ENCODE measurements at regions of chr19 and their contacts with region 1.

Region 1: GRCh38 chr19:41353466-41354342 is at the start of gene TGFB1:
- DNase-seq: peak; percentile 81
- H3K4me3 ChIP-seq: peak within 1 kb of the TSS; percentile 75 to 99 (median 90)
- H3K27ac ChIP-seq: peak within 1 kb of the TSS; percentile 70
- H3K4me1 ChIP-seq: peaks cover 12% of the 10 kb centered on the region
- H3K27me3 ChIP-seq: no peaks in the 10 kb centered on the region
- CTCF ChIP-seq: peak; percentile 92 to 96
- POLR2A ChIP-seq: peak; percentile 88
- total RNA-seq, gene TGFB1: 250 and 294 TPM in 2 replicates

Region 2: DNA sequence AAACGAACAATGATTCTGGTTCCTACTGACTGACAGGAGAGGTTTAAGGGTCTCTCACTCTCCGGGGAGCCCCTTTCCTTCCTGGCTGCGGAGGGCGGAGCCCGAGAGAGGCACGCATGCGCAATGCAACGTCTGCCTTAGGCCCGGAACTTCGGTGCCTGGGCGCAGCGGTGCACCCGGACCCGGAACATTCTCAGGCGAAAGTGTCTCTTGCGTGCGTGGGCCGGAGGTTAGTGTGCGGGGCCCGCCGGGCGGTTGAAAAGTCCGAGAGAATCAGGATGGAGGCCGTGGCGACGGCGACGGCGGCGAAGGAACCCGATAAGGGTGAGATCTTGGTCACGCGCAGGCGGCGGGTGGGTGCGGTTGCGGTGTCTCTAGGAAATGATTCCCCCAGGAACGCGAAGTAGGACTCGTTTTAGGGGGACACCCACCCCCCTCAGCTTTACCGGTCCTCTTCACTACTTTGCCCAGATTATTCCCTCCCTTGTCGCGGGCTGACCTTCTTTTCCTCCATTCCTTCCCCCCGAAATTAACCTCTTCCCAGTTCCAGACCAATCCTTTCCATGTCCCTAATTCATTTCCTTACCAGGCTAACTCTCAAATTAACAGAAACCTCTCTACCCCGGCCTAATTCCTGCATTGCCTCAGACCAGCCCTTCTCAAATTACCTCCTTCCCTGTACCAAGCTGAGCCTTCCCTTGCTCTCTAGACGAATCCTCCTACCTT is 43.5 kb before region 1 on chr19 and contains the start of gene CCDC97:
- CTCF ChIA-PET with region 1: interaction called, 19 read pairs
- POLR2A ChIA-PET with region 1: no interaction called
- dilution Hi-C with region 1: no loop called
- intact Hi-C with region 1: loop called (anchors 1 kb)
- DNase-seq: peak; percentile 91
- H3K4me3 ChIP-seq: peak within 1 kb of the TSS; percentile 71 to 97 (median 81)
- H3K27ac ChIP-seq: peak within 1 kb of the TSS; percentile 57
- H3K4me1 ChIP-seq: peaks cover 42% of the 10 kb centered on the region
- H3K27me3 ChIP-seq: no peaks in the 10 kb centered on the region
- CTCF ChIP-seq: no peak
- POLR2A ChIP-seq: peak; percentile 98
- total RNA-seq, gene CCDC97: 24.2 and 27.2 TPM in 2 replicates

Region 3: GRCh38 chr19:41327576-41328156 is 26.0 kb before region 1 on chr19:
- CTCF ChIA-PET with region 1: interaction called, 40 read pairs
- POLR2A ChIA-PET with region 1: interaction called, 4 read pairs
- dilution Hi-C with region 1: no loop called
- intact Hi-C with region 1: loop called (anchors 1 kb)
- DNase-seq: peak; percentile 88
- H3K4me3 ChIP-seq: peak overlapping the region in 1 of 3 experiments; percentile 1
- H3K27ac ChIP-seq: peak overlapping the region; percentile 100
- H3K4me1 ChIP-seq: peaks cover 61% of the 10 kb centered on the region
- H3K27me3 ChIP-seq: no peaks in the 10 kb centered on the region
- CTCF ChIP-seq: no peak
- POLR2A ChIP-seq: no peak

Region 4: GRCh38 chr19:41397086-41398049 is 43.7 kb after region 1 on chr19 and contains the starts of genes BCKDHA and EXOSC5:
- CTCF ChIA-PET with region 1: interaction called, 4 read pairs
- POLR2A ChIA-PET with region 1: no interaction called
- dilution Hi-C with region 1: no loop called
- intact Hi-C with region 1: loop called (anchors 1 kb)
- DNase-seq: peak; percentile 100
- H3K4me3 ChIP-seq: peak within 1 kb of the TSS; percentile 79 to 95 (median 81)
- H3K27ac ChIP-seq: peak within 1 kb of the TSS; percentile 93
- H3K4me1 ChIP-seq: peaks cover 29% of the 10 kb centered on the region
- H3K27me3 ChIP-seq: no peaks in the 10 kb centered on the region
- CTCF ChIP-seq: no peak
- POLR2A ChIP-seq: peak; percentile 43
- total RNA-seq, gene BCKDHA: 12.9 and 16.5 TPM in 2 replicates
- total RNA-seq, gene EXOSC5: 13.8 and 14.0 TPM in 2 replicates

Region 5: GRCh38 chr19:41439441-41440222 is 85.9 kb after region 1 on chr19 and contains the start of gene DMAC2:
- CTCF ChIA-PET with region 1: interaction called, 10 read pairs
- POLR2A ChIA-PET with region 1: no interaction called
- dilution Hi-C with region 1: no loop called
- intact Hi-C with region 1: no loop called
- DNase-seq: peak; percentile 98
- H3K4me3 ChIP-seq: peak within 1 kb of the TSS; percentile 66 to 87 (median 76)
- H3K27ac ChIP-seq: peak within 1 kb of the TSS; percentile 89
- H3K4me1 ChIP-seq: peaks cover 6% of the 10 kb centered on the region
- H3K27me3 ChIP-seq: peaks cover 0 to 2% of the 10 kb centered on the region in 2 experiments
- CTCF ChIP-seq: peak; percentile 37 to 52
- POLR2A ChIP-seq: peak; percentile 79
- total RNA-seq, gene DMAC2: 63.2 and 65.4 TPM in 2 replicates

Region 6: GRCh38 chr19:41597600-41598041 is 243.9 kb after region 1 on chr19:
- CTCF ChIA-PET with region 1: no interaction called
- POLR2A ChIA-PET with region 1: no interaction called
- dilution Hi-C with region 1: no loop called
- intact Hi-C with region 1: no loop called
- DNase-seq: peak; percentile 70
- H3K4me3 ChIP-seq: no peak overlapping the region
- H3K27ac ChIP-seq: no peak overlapping the region
- H3K4me1 ChIP-seq: peaks cover 5% of the 10 kb centered on the region
- H3K27me3 ChIP-seq: peaks cover 8 to 18% of the 10 kb centered on the region in 2 experiments
- CTCF ChIP-seq: peak; percentile 85 to 89
- POLR2A ChIP-seq: no peak

Measured in endothelial cell of umbilical vein (primary cell).